ENCODE measurements at regions of chr19 and their contacts with region 1.

Region 1: DNA sequence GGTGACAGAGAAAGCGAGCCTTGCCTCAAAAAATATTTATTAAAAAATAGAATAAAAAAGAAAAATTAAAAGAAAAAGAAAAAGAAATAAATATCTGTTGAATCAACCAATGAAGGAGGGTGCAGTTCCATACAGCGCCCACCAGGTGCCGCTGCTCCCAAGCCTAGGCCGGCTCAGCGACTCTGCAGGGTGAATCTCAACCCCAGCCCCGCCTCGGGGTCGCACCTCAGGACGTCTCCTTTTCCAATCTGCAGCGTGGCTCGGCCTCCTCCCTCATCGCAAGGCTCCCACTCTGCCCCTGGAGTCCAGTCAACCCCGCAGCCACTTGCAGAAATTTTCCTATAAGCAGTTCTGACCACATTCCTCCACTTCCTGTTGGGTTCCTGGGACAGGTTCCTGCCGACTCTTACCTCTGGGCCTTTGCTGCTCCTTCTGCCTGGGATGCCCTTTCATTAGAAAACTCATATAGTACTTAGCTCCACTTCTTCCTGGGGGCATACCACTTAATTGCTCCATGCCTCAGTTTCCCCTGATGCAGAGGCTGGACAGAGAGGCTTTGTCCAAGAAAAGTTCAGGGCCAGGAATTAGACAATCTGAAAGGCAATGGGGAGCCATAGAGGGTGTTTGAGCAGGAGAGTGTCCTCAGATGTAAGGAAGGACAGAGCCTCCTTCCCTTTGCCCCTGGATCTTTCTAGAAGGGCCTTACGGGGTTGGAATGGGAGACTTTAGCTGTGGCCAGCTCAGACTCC is 24.3 kb downstream of the NFILZ start:
- DNase-seq: peak; percentile 78
- ATAC-seq: peak; percentile 87
- H3K4me3 Mint-ChIP-seq: peak overlapping the region; percentile 37; the same call in 1 of the 2 replicates
- H3K27ac Mint-ChIP-seq: no peak overlapping the region
- H3K4me1 Mint-ChIP-seq: no peaks in the 10 kb centered on the region
- H3K27me3 Mint-ChIP-seq: peaks cover 4% of the 10 kb centered on the region; the same call in 1 of the 2 replicates
- CTCF ChIP-seq: peak; percentile 100

Region 2: DNA sequence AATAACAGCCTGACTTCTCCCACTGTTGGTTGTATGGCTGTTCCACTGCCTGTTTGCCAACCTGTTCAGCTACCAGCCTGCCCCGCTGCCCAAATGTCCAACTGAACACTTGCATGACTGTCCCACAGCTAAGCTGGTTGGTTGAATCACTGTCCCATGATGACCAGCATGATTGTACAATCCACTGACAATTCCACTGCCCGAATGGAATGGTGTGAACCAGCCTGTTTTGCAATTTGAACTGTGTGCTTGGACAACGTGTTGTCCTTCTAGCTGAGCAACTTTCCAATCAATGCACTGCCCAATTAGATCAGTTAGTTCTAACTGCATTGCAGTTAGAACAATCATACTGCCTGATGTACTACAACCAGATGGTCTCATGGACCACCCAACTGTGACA is 53.0 kb before region 1 on chr19:
- CTCF ChIA-PET with region 1: no interaction called
- POLR2A ChIA-PET with region 1: no interaction called
- DNase-seq: no peak
- ATAC-seq: no peak
- H3K4me3 Mint-ChIP-seq: no peak overlapping the region
- H3K27ac Mint-ChIP-seq: peak overlapping the region; percentile 54; the same call in 1 of the 2 replicates
- H3K4me1 Mint-ChIP-seq: peaks cover 3% of the 10 kb centered on the region; the same call in 1 of the 2 replicates
- H3K27me3 Mint-ChIP-seq: no peaks in the 10 kb centered on the region
- CTCF ChIP-seq: no peak

Region 3: DNA sequence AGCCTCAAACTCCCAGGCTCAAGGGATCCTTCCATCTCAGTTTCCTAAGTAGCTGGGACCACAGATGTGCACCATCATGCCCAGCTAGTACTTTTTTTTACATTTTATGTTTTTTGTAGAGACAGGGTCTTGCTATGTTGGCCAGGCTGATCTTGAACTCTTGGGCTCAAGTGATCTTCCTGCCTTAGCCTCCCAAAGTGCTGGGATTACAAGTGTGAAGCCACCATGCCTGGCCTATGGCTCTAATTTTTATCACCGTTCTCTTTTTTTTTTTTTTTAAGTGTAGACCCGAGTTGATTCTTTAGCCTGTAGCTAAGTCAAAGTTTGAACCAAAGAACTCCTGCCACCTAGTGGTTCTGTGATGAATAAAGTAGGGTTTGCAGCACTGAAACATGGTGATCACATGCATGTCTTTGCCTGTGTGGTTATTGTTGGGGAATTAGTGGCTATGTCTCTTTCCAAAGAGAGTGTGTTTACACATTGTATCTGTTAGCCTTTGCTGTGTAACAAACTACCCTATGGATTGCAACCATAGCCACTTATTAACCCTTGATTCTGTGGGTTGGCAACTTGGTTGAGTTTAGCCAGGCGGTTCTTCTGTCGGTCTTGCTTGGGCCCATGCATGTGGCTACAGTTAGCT is 12.7 kb before region 1 on chr19:
- CTCF ChIA-PET with region 1: interaction called, 21 read pairs
- POLR2A ChIA-PET with region 1: no interaction called
- DNase-seq: no peak
- ATAC-seq: 0 out of 2 replicates have a peak, but pooled peaks have one; percentile 30
- H3K4me3 Mint-ChIP-seq: no peak overlapping the region
- H3K27ac Mint-ChIP-seq: no peak overlapping the region
- H3K4me1 Mint-ChIP-seq: 0 out of 2 replicates have a peak, but pooled peaks cover 2% of the 10 kb centered on the region
- H3K27me3 Mint-ChIP-seq: peaks cover 27% of the 10 kb centered on the region
- CTCF ChIP-seq: peak; percentile 37; the same call in 1 of the 2 replicates

Region 4: DNA sequence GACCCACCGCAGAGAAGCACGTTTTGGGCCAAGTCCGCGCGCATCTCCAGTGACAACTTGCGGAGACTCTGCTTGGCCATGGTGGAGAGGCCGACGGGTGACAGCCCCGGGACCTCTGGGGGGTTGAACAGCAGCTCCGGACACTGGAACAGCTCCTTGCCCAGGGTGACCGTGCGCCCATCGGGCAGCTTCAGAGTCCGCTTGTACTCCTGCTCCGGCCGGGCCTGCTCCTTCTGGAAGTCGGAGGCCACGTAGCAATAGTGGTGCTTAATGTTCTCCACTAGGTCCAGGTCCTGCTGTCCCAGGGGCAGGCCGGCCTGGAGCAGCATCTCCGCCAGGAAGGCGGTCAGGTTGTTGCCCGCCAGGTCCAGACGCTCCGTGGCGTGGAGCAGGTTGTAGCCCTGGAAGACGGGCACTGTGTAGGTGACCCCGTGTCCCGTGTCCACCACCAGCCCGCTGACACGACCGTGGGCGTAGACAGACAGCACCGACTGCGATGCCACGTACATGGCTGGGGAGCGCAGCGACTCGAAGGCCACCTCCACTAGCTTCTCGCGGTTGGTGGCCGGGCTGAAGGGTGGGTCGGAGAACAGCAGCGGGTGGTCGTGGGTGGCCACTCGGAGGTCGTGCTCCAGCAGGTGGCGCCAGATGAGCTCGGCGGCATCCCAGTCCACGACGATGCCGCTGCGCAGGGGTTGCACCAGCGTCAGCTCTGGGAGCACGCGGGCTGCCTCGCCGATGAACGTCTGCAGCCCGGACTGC is 43.1 kb after region 1 on chr19:
- CTCF ChIA-PET with region 1: interaction called, 21 read pairs
- POLR2A ChIA-PET with region 1: no interaction called
- DNase-seq: peak; percentile 68
- ATAC-seq: peak; percentile 69
- H3K4me3 Mint-ChIP-seq: no peak overlapping the region
- H3K27ac Mint-ChIP-seq: no peak overlapping the region
- H3K4me1 Mint-ChIP-seq: no peaks in the 10 kb centered on the region
- H3K27me3 Mint-ChIP-seq: peaks cover 15% of the 10 kb centered on the region
- CTCF ChIP-seq: no peak

Measured in WTC11 (cell line).